Endothelial cell of umbilical vein (primary cell): ENCODE measurements at regions of chr3 and their contacts with region 1.

Region 1: DNA sequence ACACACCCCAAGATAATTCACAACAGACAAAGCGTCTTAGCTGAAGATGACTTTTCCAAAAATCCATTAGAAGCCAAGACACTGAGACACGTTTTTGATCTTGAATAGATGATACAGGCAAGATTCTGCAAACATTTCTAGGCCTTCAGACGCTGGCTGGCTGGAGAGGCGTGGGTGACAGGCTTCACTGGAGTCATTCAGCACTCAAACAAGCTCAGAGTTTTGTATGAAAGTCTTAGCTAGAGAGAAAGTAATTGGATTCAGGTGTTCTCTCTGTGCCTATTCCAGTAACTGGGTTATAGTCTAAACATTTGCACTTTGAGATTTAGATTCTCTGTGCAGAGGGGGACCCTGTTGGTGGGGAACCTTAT is 147.7 kb upstream of the BHLHE40 start:
- DNase-seq: no peak
- H3K4me3 ChIP-seq: no peak overlapping the region
- H3K27ac ChIP-seq: peak overlapping the region; percentile 97
- H3K4me1 ChIP-seq: peaks cover 19% of the 10 kb centered on the region
- H3K27me3 ChIP-seq: no peaks in the 10 kb centered on the region
- CTCF ChIP-seq: no peak
- POLR2A ChIP-seq: peak; percentile 3

Region 2: DNA sequence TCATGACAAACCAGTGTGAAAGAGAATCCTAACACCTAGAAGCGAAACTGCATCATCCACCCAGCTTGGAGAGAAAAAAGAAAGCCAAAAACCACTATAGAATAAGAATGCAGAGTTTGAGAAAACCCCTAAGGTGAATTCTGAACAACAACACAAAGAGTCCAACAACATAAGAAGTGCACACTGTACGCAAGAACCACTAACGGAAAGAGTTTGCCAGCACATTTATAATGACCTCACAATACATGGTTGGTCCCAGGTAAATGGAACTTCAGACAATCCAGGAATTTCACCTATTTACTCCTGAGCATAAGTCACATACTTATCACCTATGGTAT is 19.3 kb after region 1 on chr3:
- CTCF ChIA-PET with region 1: interaction called, 3 read pairs
- POLR2A ChIA-PET with region 1: no interaction called
- dilution Hi-C with region 1: no loop called
- intact Hi-C with region 1: loop called (anchors 1 kb)
- DNase-seq: no peak
- H3K4me3 ChIP-seq: no peak overlapping the region
- H3K27ac ChIP-seq: no peak overlapping the region
- H3K4me1 ChIP-seq: peaks cover 32% of the 10 kb centered on the region
- H3K27me3 ChIP-seq: no peaks in the 10 kb centered on the region
- CTCF ChIP-seq: no peak
- POLR2A ChIP-seq: no peak

Region 3: GRCh38 chr3:4994823-4995499 is 163.4 kb after region 1 on chr3:
- CTCF ChIA-PET with region 1: no interaction called
- POLR2A ChIA-PET with region 1: no interaction called
- dilution Hi-C with region 1: no loop called
- intact Hi-C with region 1: no loop called
- DNase-seq: peak; percentile 63
- H3K4me3 ChIP-seq: no peak overlapping the region
- H3K27ac ChIP-seq: peak overlapping the region; percentile 74
- H3K4me1 ChIP-seq: peaks cover 22% of the 10 kb centered on the region
- H3K27me3 ChIP-seq: no peaks in the 10 kb centered on the region
- CTCF ChIP-seq: no peak
- POLR2A ChIP-seq: no peak